ENCODE measurements at regions of chr22 and their contacts with region 1.

Region 1: GRCh38 chr22:44080936-44081861 is 57.1 kb downstream of the PARVB start:
- DNase-seq: peak; percentile 81
- ATAC-seq: no peak
- H3K4me3 Mint-ChIP-seq: no peak overlapping the region
- H3K27ac Mint-ChIP-seq: no peak overlapping the region
- H3K4me1 Mint-ChIP-seq: no peaks in the 10 kb centered on the region
- H3K27me3 Mint-ChIP-seq: no peaks in the 10 kb centered on the region

Region 2: DNA sequence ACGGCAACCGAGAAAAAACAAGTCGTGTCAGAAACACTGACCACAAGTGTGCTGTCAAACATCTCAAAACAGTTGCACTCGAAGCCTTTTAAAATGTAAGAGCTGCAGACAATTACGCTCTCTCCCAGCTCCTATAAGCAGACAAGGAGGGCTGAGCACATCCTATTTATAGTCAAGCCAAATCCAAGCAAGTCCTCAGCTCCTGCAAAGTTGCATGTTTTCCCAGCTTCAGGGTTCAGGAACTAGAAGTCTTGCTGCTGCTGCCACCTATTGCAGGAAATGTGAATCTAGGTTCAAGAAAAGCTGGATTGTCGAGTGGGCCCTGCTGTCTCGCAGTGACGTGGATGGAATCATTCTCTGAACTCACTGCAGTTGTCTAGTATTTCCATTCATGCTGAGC is 284.6 kb before region 1 on chr22:
- CTCF ChIA-PET with region 1: no interaction called
- POLR2A ChIA-PET with region 1: no interaction called
- DNase-seq: no peak
- ATAC-seq: no peak
- H3K4me3 Mint-ChIP-seq: no peak overlapping the region
- H3K27ac Mint-ChIP-seq: no peak overlapping the region
- H3K4me1 Mint-ChIP-seq: no peaks in the 10 kb centered on the region
- H3K27me3 Mint-ChIP-seq: peaks cover 10% of the 10 kb centered on the region

Region 3: DNA sequence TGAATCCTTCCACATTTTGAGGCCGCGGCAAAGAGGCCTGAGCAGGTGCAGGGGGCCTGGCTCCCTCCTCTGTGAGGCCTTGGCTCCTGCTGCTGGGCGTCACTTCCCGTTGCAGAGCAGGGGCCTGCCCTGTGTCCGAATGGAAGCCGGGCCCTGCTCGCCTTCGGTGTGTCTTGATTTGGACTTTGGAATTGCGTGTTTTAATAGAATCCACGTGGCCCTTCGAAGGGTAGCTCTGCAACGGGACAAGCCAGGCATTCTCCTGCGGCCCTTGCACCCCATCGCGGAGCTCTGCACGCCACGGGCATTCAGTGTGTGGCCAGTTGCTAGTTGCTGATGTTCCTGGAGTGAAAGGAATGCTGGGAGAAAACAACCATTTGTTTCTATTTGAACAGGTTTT is 100.2 kb before region 1 on chr22:
- CTCF ChIA-PET with region 1: interaction called, 12 read pairs
- POLR2A ChIA-PET with region 1: no interaction called
- DNase-seq: no peak
- ATAC-seq: no peak
- H3K4me3 Mint-ChIP-seq: no peak overlapping the region
- H3K27ac Mint-ChIP-seq: no peak overlapping the region
- H3K4me1 Mint-ChIP-seq: no peaks in the 10 kb centered on the region
- H3K27me3 Mint-ChIP-seq: no peaks in the 10 kb centered on the region

Region 4: GRCh38 chr22:44180706-44181032 is 99.5 kb after region 1 on chr22 and contains the start of gene PARVG:
- CTCF ChIA-PET with region 1: interaction called, 11 read pairs
- POLR2A ChIA-PET with region 1: no interaction called
- DNase-seq: peak; percentile 72
- ATAC-seq: peak; percentile 30
- H3K4me3 Mint-ChIP-seq: peak within 1 kb of the TSS; percentile 95
- H3K27ac Mint-ChIP-seq: peak within 1 kb of the TSS; percentile 92
- H3K4me1 Mint-ChIP-seq: peaks cover 32% of the 10 kb centered on the region
- H3K27me3 Mint-ChIP-seq: peaks cover 10% of the 10 kb centered on the region
- total RNA-seq, gene PARVG: 175 to 186 TPM

Region 5: GRCh38 chr22:44625981-44626687 is 544.9 kb after region 1 on chr22:
- CTCF ChIA-PET with region 1: interaction called, 19 read pairs
- POLR2A ChIA-PET with region 1: no interaction called
- DNase-seq: peak; percentile 88
- ATAC-seq: peak; percentile 66
- H3K4me3 Mint-ChIP-seq: no peak overlapping the region
- H3K27ac Mint-ChIP-seq: peak overlapping the region; percentile 16
- H3K4me1 Mint-ChIP-seq: peaks cover 7% of the 10 kb centered on the region
- H3K27me3 Mint-ChIP-seq: peaks cover 4% of the 10 kb centered on the region